ENCODE measurements at regions of chr5 and their contacts with region 1.

Region 1: GRCh38 chr5:56481428-56482357 is 248.6 kb upstream of the ANKRD55 start:
- DNase-seq: peak in 4 of 5 donors; percentile 13 to 39 (median 27)
- H3K4me3 ChIP-seq: peak overlapping the region; percentile 52 to 55
- H3K4me3 Mint-ChIP-seq: peak overlapping the region; percentile 87 to 95 (median 92)
- H3K27ac ChIP-seq: peak overlapping the region; percentile 80
- H3K27ac Mint-ChIP-seq: peak overlapping the region; percentile 83 to 98 (median 95)
- H3K4me1 ChIP-seq: peaks cover 49% of the 10 kb centered on the region
- H3K4me1 Mint-ChIP-seq: peaks cover 30 to 54% (median 42%) of the 10 kb centered on the region in 4 donors
- H3K27me3 ChIP-seq: no peaks in the 10 kb centered on the region
- H3K27me3 Mint-ChIP-seq: no peaks in the 10 kb centered on the region

Region 2: DNA sequence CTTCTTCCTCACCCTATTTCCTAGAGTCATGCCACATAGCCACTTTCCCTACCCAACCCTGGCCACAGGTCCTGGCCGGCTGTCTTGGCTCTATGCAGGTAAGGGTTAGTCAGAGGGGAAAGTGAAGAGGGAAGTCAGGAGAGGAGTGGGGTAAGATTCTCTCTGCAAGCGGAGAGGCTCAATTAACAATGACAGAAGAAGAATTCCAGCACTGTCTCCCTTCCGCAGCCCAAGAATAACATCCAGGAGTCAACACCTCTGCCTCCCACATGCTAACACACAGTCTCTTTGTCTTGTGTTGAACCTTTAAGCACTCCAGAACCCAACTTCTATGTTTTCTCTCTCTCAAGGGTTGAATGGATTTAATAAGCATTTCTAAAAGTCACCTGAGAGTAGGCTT is 13.4 kb before region 1 on chr5:
- CTCF ChIA-PET with region 1: interaction called, 12 read pairs
- POLR2A ChIA-PET with region 1: interaction called, 12 read pairs
- intact Hi-C with region 1: no loop called
- DNase-seq: no peak
- H3K4me3 ChIP-seq: no peak overlapping the region
- H3K4me3 Mint-ChIP-seq: no peak overlapping the region
- H3K27ac ChIP-seq: no peak overlapping the region
- H3K27ac Mint-ChIP-seq: no peak overlapping the region
- H3K4me1 ChIP-seq: no peaks in the 10 kb centered on the region
- H3K4me1 Mint-ChIP-seq: peaks cover 0 to 8% (median 4%) of the 10 kb centered on the region in 4 donors
- H3K27me3 ChIP-seq: no peaks in the 10 kb centered on the region
- H3K27me3 Mint-ChIP-seq: no peaks in the 10 kb centered on the region

Region 3: DNA sequence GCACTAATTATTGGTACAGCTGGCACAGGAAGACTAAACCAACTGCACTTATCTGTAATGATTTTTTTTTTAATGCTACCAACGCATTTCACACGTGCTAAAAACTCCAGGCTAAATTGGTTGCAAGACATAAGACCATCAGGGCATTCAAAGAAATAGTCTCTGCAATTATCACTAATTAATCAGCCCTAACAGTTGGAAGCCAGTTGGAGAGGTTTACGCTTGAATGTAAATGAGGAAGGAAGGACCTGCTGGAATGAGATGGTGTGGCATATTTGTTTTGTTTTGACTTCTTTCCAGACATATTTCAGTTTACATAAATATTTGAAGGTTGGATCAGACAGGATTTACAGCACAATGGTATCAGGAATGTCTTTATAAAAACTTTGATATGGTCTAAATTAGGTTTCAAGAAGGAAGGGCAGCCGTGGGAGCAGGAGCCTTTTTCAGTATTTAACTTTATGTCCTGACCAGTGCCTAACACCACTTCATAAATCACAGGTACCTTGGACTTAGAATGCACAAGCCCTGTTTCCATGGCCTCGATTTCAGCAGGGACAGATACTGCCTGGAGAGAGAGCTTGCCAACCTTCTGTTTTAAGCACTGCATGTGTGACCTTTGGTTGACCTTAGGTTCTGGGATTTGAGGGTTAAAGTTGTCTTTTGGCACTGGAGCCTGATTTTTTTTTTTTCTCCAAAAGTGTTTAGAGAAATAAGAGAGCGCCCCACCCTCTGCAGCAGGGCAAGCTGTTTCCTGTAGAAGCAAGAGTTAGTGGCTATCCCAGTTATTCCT is 133.9 kb after region 1 on chr5:
- CTCF ChIA-PET with region 1: no interaction called
- POLR2A ChIA-PET with region 1: interaction called, 19 read pairs
- intact Hi-C with region 1: no loop called
- DNase-seq: no peak
- H3K4me3 ChIP-seq: no peak overlapping the region
- H3K4me3 Mint-ChIP-seq: peak overlapping the region in 7 of 8 donors; percentile 33 to 89 (median 54)
- H3K27ac ChIP-seq: no peak overlapping the region
- H3K27ac Mint-ChIP-seq: peak overlapping the region; percentile 69 to 93 (median 81)
- H3K4me1 ChIP-seq: peaks cover 68% of the 10 kb centered on the region
- H3K4me1 Mint-ChIP-seq: peaks cover 56 to 69% (median 63%) of the 10 kb centered on the region in 4 donors
- H3K27me3 ChIP-seq: no peaks in the 10 kb centered on the region
- H3K27me3 Mint-ChIP-seq: no peaks in the 10 kb centered on the region

Region 4: GRCh38 chr5:56686337-56687195 is 204.9 kb after region 1 on chr5:
- CTCF ChIA-PET with region 1: interaction called, 6 read pairs
- POLR2A ChIA-PET with region 1: interaction called, 114 read pairs
- intact Hi-C with region 1: no loop called
- DNase-seq: peak in 4 of 5 donors; percentile 33 to 48 (median 41)
- H3K4me3 ChIP-seq: peak overlapping the region in 1 of 2 donors; percentile 15
- H3K4me3 Mint-ChIP-seq: peak overlapping the region in 7 of 8 donors; percentile 29 to 72 (median 52)
- H3K27ac ChIP-seq: peak overlapping the region; percentile 31
- H3K27ac Mint-ChIP-seq: peak overlapping the region; percentile 44 to 91 (median 84)
- H3K4me1 ChIP-seq: peaks cover 99% of the 10 kb centered on the region
- H3K4me1 Mint-ChIP-seq: peaks cover 60 to 100% (median 80%) of the 10 kb centered on the region in 4 donors
- H3K27me3 ChIP-seq: no peaks in the 10 kb centered on the region
- H3K27me3 Mint-ChIP-seq: no peaks in the 10 kb centered on the region

Region 5: DNA sequence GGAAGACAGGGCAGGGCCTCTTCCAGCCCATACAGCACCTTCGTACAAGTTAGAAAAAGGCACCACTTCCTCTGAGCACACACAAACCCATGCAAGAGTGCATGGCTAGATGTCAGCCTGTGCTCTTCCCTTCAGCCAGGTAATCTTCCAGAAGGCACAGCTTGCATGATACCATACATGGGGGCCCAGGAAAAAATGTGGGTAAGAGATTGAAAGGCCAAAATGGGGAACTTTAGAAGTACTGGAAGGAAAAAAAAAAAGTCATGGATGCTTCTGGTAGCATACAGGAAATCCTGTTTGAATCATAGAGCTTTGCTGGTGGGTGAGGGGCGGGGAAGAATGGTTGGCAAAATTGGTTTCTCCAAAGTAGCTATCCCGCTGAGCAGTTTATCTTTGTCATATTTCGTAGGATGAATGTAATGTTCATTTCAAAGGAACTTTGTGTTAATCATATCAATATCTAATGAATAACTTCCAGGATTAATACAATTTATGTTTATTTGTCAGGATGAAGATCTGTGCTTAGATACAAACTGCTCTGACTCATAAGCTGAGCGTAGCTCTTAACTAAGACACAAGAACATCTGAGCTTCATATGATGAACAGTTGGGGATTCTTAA is 255.4 kb after region 1 on chr5:
- CTCF ChIA-PET with region 1: no interaction called
- POLR2A ChIA-PET with region 1: interaction called, 16 read pairs
- intact Hi-C with region 1: no loop called
- DNase-seq: no peak
- H3K4me3 ChIP-seq: no peak overlapping the region
- H3K4me3 Mint-ChIP-seq: peak overlapping the region in 7 of 8 donors; percentile 49 to 85 (median 74)
- H3K27ac ChIP-seq: peak overlapping the region; percentile 45
- H3K27ac Mint-ChIP-seq: peak overlapping the region; percentile 73 to 97 (median 94)
- H3K4me1 ChIP-seq: peaks cover 55% of the 10 kb centered on the region
- H3K4me1 Mint-ChIP-seq: peaks cover 39 to 68% (median 56%) of the 10 kb centered on the region in 4 donors
- H3K27me3 ChIP-seq: no peaks in the 10 kb centered on the region
- H3K27me3 Mint-ChIP-seq: no peaks in the 10 kb centered on the region

Region 6: DNA sequence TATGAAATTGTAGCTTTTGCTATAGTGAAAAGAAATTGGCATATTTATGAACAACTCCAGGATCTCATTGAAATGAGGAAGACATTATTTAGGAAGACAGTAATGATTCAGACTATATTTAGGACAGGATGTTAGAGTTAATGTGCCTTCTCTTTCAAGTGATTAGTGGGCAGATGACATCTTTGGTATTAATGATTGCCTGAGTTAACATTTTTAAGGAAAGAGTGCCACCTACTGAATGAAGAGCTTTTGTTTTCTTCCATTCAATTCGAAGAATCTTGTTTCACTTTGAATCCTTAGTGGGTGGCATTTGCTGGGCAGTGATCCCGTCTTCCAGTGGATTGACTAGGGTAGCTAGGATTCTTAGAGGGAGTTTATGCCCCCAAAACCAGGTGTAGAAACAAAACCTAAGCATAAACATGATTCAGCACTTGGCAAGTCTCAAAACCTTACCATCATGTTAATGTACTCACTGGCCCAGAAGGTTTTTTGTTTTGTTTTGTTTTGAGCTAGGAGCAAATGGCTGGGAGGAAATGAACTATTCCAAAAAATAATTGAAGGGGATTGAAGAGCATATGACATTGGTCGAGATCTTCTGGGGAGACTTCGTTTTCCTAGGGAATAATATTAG is 356.8 kb after region 1 on chr5:
- CTCF ChIA-PET with region 1: interaction called, 19 read pairs
- POLR2A ChIA-PET with region 1: interaction called, 19 read pairs
- intact Hi-C with region 1: loop called (anchors 1 kb)
- DNase-seq: peak in 4 of 5 donors; percentile 64 to 69 (median 64)
- H3K4me3 ChIP-seq: peak overlapping the region in 1 of 2 donors; percentile 9
- H3K4me3 Mint-ChIP-seq: peak overlapping the region in 7 of 8 donors; percentile 43 to 88 (median 70)
- H3K27ac ChIP-seq: peak overlapping the region; percentile 45
- H3K27ac Mint-ChIP-seq: peak overlapping the region; percentile 67 to 92 (median 92)
- H3K4me1 ChIP-seq: peaks cover 99% of the 10 kb centered on the region
- H3K4me1 Mint-ChIP-seq: peaks cover 77 to 95% (median 87%) of the 10 kb centered on the region in 4 donors
- H3K27me3 ChIP-seq: no peaks in the 10 kb centered on the region
- H3K27me3 Mint-ChIP-seq: no peaks in the 10 kb centered on the region